Cardiac septum (tissue), 1 donor: ENCODE measurements at regions of chr3 and their contacts with region 1.

Region 1: GRCh38 chr3:138068579-138069174 is 46.7 kb downstream of the DZIP1L start:
- DNase-seq: peak; percentile 92

Region 2: DNA sequence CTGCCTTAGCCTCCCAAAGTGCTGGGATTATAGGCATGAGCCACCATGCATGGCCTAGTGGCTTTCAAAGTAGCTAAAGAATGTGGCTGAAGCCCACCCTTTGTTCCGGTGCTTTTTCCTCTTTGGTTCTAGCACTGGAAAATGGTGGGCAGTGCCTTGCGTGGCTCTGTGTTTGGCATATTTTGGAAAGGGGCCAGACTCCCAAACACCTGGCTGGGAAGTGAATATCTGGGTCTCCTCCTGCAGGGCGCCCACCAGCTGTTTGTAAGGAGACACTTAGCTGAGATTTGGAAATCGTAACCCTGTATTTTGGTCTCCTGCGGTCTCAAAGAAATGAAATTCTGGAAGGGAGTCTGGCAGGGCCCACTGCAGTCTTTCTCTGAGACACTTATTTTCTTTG is 774.5 kb before region 1 on chr3:
- intact Hi-C with region 1: no loop called
- DNase-seq: no peak

Region 3: GRCh38 chr3:138118612-138119422 is 50.1 kb after region 1 on chr3:
- intact Hi-C with region 1: loop called (anchors 2 kb)
- DNase-seq: peak; percentile 84

Region 4: DNA sequence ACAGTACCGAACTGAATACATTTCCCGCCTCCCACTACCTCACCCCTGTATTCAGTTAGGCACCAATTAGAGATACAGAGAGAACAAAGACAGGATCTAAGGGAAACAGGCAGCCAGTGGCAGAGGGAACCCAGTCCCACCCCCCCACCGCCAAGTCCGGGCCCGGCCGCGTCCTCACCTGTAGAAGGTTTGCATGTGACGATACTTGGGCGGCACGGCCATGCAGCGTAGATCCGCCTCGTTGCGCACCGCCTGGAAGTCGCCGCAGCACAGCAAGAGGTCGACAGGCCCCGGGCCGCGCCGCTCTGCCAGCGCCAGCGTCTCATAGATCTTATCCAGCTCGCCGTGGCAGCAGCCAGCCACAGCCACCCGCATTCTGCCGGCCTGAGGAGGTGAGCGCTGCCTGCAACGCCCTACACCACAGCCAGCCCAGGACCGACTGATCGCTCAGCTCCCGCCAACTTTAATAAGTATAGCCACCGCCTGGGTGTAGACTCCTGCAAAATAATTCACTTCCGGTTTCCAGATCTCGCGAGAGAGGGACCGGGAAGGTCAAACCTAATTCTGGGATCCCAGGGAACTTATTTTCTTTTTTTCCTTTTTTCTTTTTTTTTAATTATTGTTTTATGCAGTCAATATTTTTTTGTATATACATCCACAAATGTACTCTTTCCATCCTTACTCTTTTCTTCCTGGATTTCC is 105.9 kb after region 1 on chr3 and contains the start of gene DBR1:
- intact Hi-C with region 1: loop called (anchors 5 kb)
- DNase-seq: peak; percentile 82
- total RNA-seq, gene DBR1: 7.4 TPM

Region 5: GRCh38 chr3:138329127-138329983 is 260.7 kb after region 1 on chr3 and contains the start of gene NME9:
- intact Hi-C with region 1: loop called (anchors 10 kb)
- DNase-seq: peak; percentile 93
- total RNA-seq, gene NME9: not detected

Region 6: DNA sequence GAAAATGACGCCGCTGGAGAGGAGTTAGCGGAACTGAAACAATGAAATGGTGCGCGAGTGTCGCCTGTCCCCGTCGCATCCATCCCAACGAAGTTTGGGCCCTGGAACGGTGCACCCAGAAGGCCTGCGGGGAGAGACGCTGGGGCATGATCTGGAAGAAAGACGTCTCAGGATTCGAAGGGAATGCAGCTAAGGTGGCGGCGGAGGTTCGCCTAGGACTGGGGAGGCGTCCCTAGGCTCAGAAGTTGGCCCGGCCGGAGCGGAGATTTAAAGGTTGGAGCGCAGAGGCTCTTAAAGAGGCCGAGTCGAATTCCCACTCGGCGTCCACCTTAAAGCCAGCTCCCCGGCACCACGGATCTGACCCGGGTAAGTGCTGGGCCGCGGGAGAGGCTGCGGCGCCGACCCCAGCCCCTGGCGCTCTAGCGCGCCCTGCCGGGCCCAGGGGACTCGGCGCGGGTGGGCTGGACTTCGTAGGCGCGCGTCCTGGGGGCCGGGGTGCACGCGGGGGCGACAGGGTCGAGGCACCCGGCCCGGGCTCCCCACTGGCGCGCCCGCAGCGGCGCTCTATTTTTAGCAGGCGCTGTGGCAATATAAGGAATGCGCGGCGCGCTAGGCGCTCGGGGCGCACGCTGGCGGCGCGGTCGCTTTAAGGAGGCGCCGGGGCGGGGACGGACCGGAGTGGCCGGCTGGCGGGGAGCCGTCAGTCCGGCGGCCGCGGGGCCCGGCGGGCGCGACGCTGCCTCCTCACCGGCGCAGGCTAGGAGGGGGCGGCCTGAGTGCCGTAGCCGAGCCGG is 279.5 kb after region 1 on chr3 and contains the start of gene MRAS:
- intact Hi-C with region 1: no loop called
- DNase-seq: peak; percentile 90
- total RNA-seq, gene MRAS: 327 TPM

Region 7: DNA sequence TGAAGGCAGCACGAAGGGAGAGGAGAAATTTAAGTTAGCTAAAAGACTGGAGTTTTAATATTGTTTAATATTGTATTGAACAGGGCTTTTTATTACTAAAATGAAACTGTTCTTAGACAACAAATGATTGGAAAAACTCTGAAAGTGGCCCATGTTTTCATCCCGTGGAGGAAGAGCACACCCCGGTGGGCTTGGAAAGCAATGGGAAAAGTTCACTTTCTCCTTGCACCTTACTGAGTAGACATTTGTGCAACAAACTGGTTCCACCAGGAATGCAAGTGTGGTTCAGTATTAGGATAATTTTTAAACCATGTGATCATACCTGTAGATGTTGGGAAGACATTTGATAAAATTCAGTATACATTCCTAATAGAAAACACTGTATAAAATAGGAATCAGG is 357.5 kb after region 1 on chr3:
- intact Hi-C with region 1: loop called (anchors 10 kb)
- DNase-seq: no peak